ENCODE measurements at regions of chr3 and their contacts with region 1.

Region 1: GRCh38 chr3:58305882-58306711 is at the starts of genes HTD2 and RPP14:
- DNase-seq: peak; percentile 92
- ATAC-seq: peak; percentile 93
- H3K4me3 ChIP-seq: peak within 1 kb of the TSS; percentile 70 to 95 (median 93)
- H3K27ac ChIP-seq: peak within 1 kb of the TSS; percentile 93
- H3K4me1 ChIP-seq: peaks cover 28% of the 10 kb centered on the region
- H3K27me3 ChIP-seq: peaks cover 0 to 3% of the 10 kb centered on the region in 2 experiments; a peak in 1 of 5 replicates
- CTCF ChIP-seq: peak; percentile 97
- EP300 ChIP-seq: peak in 1 of 2 experiments; percentile 26; a peak in 1 of 4 replicates
- POLR2A ChIP-seq: peak; percentile 70 to 73
- RAD21 ChIP-seq: peak; percentile 44
- total RNA-seq, gene HTD2: 13.7 and 20.1 TPM in 2 replicates
- total RNA-seq, gene RPP14: 15.4 and 21.5 TPM in 2 replicates

Region 2: GRCh38 chr3:58177747-58178527 is 128.2 kb before region 1 on chr3:
- CTCF ChIA-PET with region 1: no interaction called
- POLR2A ChIA-PET with region 1: interaction called, 21 read pairs
- in situ Hi-C with region 1: no loop called
- intact Hi-C with region 1: no loop called
- DNase-seq: peak; percentile 67
- ATAC-seq: peak; percentile 44
- H3K4me3 ChIP-seq: peak overlapping the region in 1 of 3 experiments; percentile 57; a peak in 3 of 6 replicates
- H3K27ac ChIP-seq: peak overlapping the region; percentile 32
- H3K4me1 ChIP-seq: peaks cover 100% of the 10 kb centered on the region
- H3K27me3 ChIP-seq: peaks cover 0 to 16% of the 10 kb centered on the region in 2 experiments; a peak in 2 of 5 replicates
- CTCF ChIP-seq: peak; percentile 97
- EP300 ChIP-seq: no peak
- POLR2A ChIP-seq: no peak
- RAD21 ChIP-seq: peak; percentile 86

Region 3: GRCh38 chr3:58237238-58237940 is 68.7 kb before region 1 on chr3 and contains the start of gene ABHD6:
- CTCF ChIA-PET with region 1: no interaction called
- POLR2A ChIA-PET with region 1: interaction called, 9 read pairs
- in situ Hi-C with region 1: loop called (anchors 5 kb)
- intact Hi-C with region 1: loop called (anchors 5 kb)
- DNase-seq: peak; percentile 40
- ATAC-seq: peak; percentile 84
- H3K4me3 ChIP-seq: peak within 1 kb of the TSS; percentile 89 to 95 (median 93)
- H3K27ac ChIP-seq: peak within 1 kb of the TSS; percentile 44
- H3K4me1 ChIP-seq: peaks cover 68% of the 10 kb centered on the region
- H3K27me3 ChIP-seq: peaks cover 1 to 11% of the 10 kb centered on the region in 2 experiments; a peak in 3 of 5 replicates
- CTCF ChIP-seq: peak; percentile 76
- EP300 ChIP-seq: no peak
- POLR2A ChIP-seq: peak in 1 of 2 experiments; percentile 61; a peak in 1 of 4 replicates
- RAD21 ChIP-seq: peak; percentile 83
- total RNA-seq, gene ABHD6: 5.7 and 9.0 TPM in 2 replicates

Region 4: DNA sequence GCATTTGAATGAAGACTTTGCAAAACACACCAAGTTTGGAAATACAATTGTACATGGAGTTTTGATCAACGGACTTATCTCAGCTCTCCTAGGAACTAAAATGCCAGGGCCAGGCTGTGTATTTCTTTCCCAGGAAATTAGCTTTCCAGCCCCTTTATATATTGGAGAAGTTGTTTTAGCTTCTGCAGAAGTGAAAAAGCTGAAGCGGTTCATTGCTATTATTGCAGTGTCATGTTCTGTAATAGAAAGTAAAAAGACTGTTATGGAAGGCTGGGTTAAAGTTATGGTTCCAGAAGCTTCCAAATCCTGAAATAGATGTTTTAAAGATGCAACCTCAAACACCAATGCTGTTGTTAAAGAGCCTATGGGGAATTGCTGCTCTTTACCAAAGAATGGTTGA is 11.7 kb after region 1 on chr3:
- CTCF ChIA-PET with region 1: no interaction called
- POLR2A ChIA-PET with region 1: interaction called, 10 read pairs
- in situ Hi-C with region 1: no loop called
- intact Hi-C with region 1: no loop called
- DNase-seq: no peak
- ATAC-seq: no peak
- H3K4me3 ChIP-seq: no peak overlapping the region
- H3K27ac ChIP-seq: no peak overlapping the region
- H3K4me1 ChIP-seq: peaks cover 8% of the 10 kb centered on the region
- H3K27me3 ChIP-seq: no peaks in the 10 kb centered on the region
- CTCF ChIP-seq: no peak
- EP300 ChIP-seq: no peak
- POLR2A ChIP-seq: no peak
- RAD21 ChIP-seq: no peak

Region 5: GRCh38 chr3:58332575-58333188 is 26.6 kb after region 1 on chr3 and contains the start of gene PXK:
- CTCF ChIA-PET with region 1: no interaction called
- POLR2A ChIA-PET with region 1: interaction called, 15 read pairs
- in situ Hi-C with region 1: no loop called
- intact Hi-C with region 1: loop called (anchors 1 kb)
- DNase-seq: peak; percentile 21
- ATAC-seq: peak; percentile 88
- H3K4me3 ChIP-seq: peak within 1 kb of the TSS; percentile 82 to 96 (median 91)
- H3K27ac ChIP-seq: peak within 1 kb of the TSS; percentile 49
- H3K4me1 ChIP-seq: peaks cover 40% of the 10 kb centered on the region
- H3K27me3 ChIP-seq: no peaks in the 10 kb centered on the region; a peak in 1 of 5 replicates
- CTCF ChIP-seq: no peak; the same call in none of the 2 replicates
- EP300 ChIP-seq: no peak
- POLR2A ChIP-seq: no peak
- RAD21 ChIP-seq: peak; percentile 70
- total RNA-seq, gene PXK: 5.8 and 6.4 TPM in 2 replicates

Measured in HepG2 (cell line).